PC-3 (cell line): ENCODE measurements at regions of chr6 and their contacts with region 1.

Region 1: DNA sequence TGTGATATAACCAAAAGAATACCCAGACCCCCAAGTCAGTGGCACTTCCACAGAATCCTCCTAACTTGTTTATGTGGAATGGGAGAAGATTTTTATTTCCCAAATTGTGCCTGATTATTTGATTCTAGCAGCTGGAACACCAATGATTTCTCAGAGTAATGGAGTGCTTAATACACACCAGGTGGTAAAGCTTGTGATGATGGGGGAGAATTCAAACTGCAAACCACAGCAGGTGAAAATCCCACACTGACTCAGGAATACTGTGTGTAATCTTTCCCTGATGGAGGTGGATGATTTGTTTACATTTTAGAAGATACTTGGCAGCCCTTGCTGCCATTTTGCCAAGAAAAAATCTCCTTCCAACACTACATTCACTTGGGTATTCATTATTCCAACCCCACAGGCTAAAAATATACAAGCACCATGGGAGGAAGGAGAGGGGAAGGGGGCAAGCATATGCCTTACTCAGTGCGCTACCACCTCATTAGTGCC is 212.7 kb upstream of the PLN start:
- DNase-seq: no peak
- ATAC-seq: no peak
- H3K4me3 ChIP-seq: no peak overlapping the region
- H3K27ac ChIP-seq: no peak overlapping the region
- H3K4me1 ChIP-seq: no peaks in the 10 kb centered on the region
- H3K27me3 ChIP-seq: no peaks in the 10 kb centered on the region
- CTCF ChIP-seq: no peak

Region 2: DNA sequence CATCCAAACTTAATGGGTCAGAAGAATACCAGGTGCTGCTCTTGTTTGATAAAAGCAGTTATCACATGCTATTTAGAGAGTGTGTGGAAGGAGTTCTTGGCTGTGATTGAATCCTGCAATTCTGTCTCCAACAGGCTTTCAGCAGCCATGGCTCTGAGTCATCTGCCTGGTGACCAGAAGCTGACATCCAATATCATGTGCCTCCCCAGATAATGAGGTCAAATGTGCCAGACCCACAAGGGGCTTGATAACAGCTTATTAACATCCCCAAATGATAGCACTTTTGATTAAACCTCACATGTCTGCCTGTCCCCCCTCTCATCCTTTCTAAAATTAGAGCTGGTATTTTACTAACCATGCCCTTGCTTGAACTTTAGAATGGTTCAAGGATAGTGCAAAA is 37.0 kb after region 1 on chr6:
- CTCF ChIA-PET with region 1: no interaction called
- POLR2A ChIA-PET with region 1: no interaction called
- intact Hi-C with region 1: loop called (anchors 2 kb)
- DNase-seq: no peak
- ATAC-seq: no peak
- H3K4me3 ChIP-seq: no peak overlapping the region
- H3K27ac ChIP-seq: no peak overlapping the region
- H3K4me1 ChIP-seq: no peaks in the 10 kb centered on the region
- H3K27me3 ChIP-seq: no peaks in the 10 kb centered on the region
- CTCF ChIP-seq: no peak